ENCODE measurements at regions of chr12 and their contacts with region 1.

Region 1: GRCh38 chr12:83172866-83173649 is 486.4 kb downstream of the TMTC2 start:
- DNase-seq: no peak

Region 2: DNA sequence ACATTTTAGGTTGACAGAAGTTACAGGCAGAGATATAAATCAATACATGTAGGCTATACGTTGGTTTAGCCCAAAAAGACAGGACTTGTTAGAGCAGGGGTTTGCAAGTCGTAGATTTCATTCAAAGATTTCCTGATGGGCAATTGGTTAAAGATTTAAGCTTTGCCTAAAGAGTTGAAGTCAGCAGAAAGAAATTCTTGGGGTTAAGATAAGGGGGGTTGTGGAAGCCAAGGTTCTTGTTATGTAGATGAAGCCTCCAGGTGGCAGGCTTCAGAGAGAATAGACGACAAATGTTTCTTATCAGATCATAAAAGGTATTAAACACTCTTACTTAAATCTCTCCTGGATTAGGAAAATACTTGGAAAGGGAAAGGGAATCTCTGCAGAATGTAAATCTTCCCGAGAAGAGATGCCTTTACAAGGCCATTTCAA is 24.4 kb after region 1 on chr12:
- intact Hi-C with region 1: loop called in 1 of 2 experiments (anchors 2 kb)
- DNase-seq: no peak

Region 3: GRCh38 chr12:83656004-83656403 is 482.9 kb after region 1 on chr12:
- intact Hi-C with region 1: no loop called
- DNase-seq: no peak

Region 4: DNA sequence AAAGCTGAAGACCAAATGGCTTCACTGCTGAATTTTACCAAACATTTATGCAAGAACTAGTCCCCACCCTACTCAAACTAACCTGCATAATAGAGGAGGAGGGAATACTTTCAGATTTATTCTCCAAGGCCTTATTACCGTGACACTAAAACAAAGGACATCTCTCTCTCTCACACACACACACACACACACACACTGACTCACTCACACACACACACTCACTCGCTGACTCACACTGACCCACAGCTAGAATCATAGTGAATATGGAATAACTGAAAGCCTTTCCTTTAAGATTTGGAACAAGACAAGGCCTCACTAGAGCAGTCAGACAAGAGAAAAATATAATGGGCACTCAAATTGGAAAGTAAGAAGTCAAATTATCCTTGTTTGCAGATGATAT is 527.8 kb after region 1 on chr12:
- intact Hi-C with region 1: no loop called
- DNase-seq: no peak

Measured in posterior vena cava (tissue), 2 donors.